CD8-positive, alpha-beta T cell (primary cell): ENCODE measurements at regions of chr2 and their contacts with region 1.

Region 1: DNA sequence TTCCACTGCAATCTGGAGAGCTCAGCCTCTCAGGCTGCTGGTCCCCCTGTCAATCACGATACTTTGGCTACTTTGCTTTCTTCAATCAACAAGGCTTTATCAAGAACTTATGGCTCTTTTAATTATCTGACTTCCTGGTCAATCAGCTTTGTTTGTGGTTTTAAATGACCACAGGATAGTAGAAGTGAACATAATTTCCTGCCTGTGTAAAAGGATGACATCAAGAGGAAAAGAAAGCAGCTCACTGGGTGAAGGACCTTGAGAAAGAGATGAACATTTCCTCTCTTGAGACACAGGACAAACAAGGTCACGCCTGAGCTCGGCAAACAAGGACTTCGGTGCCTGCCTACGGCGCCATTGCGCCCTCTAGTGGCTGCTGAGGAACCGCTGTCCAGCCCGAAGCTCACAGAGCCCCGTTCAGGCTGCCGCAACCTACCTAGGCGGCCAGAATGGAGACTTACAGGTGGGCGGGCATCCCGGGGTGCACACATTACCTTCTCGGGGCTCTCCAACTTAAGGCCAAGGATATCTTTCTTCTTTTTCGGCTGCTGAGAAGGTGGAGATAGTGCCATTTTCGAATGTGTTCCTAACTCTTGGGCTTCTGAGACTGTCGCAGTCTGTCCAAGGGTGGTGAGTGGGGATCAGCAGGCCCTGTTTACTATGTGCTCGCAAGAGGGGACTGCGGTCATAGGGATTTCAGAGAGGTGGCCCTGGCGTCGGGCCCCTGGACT is 54.0 kb downstream of the IL1RL2 start:
- DNase-seq: peak; percentile 71 to 92 (median 85)
- ATAC-seq: peak; percentile 92
- H3K4me3 ChIP-seq: no peak overlapping the region
- H3K4me3 Mint-ChIP-seq: peak overlapping the region; percentile 22
- H3K27ac ChIP-seq: peak overlapping the region in 1 of 2 experiments; percentile 22
- H3K27ac Mint-ChIP-seq: no peak overlapping the region
- H3K4me1 ChIP-seq: peaks cover 4% of the 10 kb centered on the region
- H3K4me1 Mint-ChIP-seq: peaks cover 9% of the 10 kb centered on the region
- H3K27me3 ChIP-seq: no peaks in the 10 kb centered on the region
- H3K27me3 Mint-ChIP-seq: peaks cover 2% of the 10 kb centered on the region
- CTCF ChIP-seq: peak; percentile 95

Region 2: GRCh38 chr2:101419096-101419663 is 821.6 kb before region 1 on chr2:
- CTCF ChIA-PET with region 1: interaction called, 10 read pairs
- POLR2A ChIA-PET with region 1: no interaction called
- intact Hi-C with region 1: loop called in 1 of 2 experiments (anchors 2 kb)
- DNase-seq: peak; percentile 11 to 78 (median 63)
- ATAC-seq: peak; percentile 71
- H3K4me3 ChIP-seq: no peak overlapping the region
- H3K4me3 Mint-ChIP-seq: no peak overlapping the region
- H3K27ac ChIP-seq: no peak overlapping the region
- H3K27ac Mint-ChIP-seq: no peak overlapping the region
- H3K4me1 ChIP-seq: no peaks in the 10 kb centered on the region
- H3K4me1 Mint-ChIP-seq: no peaks in the 10 kb centered on the region
- H3K27me3 ChIP-seq: no peaks in the 10 kb centered on the region
- H3K27me3 Mint-ChIP-seq: no peaks in the 10 kb centered on the region
- CTCF ChIP-seq: peak; percentile 82

Region 3: DNA sequence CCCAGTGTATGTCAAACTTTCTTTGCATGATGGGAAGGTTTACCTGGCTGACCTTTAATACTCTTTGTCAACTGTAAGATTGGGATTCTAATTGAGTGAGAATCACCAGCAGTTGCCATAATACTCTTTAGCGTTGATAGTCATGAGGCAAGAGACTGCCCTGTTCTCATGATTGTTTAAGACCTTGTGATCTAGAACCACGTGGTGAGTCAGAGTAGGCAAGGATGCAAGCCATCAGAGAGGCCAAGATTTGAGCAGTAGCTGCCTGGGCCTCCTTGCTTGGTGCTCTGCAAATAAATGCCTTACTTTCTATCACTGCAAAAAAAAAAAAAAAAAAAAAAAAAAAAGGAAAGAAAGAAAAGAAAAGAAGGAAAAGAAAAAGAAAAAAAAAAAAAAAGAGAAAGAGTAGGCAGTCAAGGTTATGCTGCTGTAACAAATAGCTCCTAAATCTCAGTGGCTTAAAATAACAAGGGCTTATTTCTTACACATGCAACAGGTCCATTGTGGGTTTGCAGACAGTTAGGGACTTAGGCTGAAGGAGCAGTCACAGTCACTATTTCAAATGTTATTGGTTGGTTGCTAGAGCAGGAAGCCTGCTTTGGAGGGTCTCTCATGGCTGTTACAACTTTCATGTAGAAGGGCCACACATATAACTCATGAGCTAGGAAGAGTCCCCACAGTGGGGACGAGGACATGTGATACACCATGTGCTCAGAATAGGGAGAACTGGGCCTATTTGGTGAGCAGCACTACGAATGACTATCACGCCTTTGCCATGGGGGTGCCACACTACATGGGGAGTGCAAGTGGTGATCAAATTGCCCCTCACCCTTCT is 227.4 kb before region 1 on chr2:
- CTCF ChIA-PET with region 1: interaction called, 69 read pairs
- POLR2A ChIA-PET with region 1: no interaction called
- intact Hi-C with region 1: no loop called
- DNase-seq: no peak
- ATAC-seq: no peak
- H3K4me3 ChIP-seq: no peak overlapping the region
- H3K4me3 Mint-ChIP-seq: no peak overlapping the region
- H3K27ac ChIP-seq: no peak overlapping the region
- H3K27ac Mint-ChIP-seq: no peak overlapping the region
- H3K4me1 ChIP-seq: no peaks in the 10 kb centered on the region
- H3K4me1 Mint-ChIP-seq: no peaks in the 10 kb centered on the region
- H3K27me3 ChIP-seq: no peaks in the 10 kb centered on the region
- H3K27me3 Mint-ChIP-seq: no peaks in the 10 kb centered on the region
- CTCF ChIP-seq: no peak

Region 4: GRCh38 chr2:102050854-102051391 is 189.9 kb before region 1 on chr2:
- CTCF ChIA-PET with region 1: interaction called, 11 read pairs
- POLR2A ChIA-PET with region 1: no interaction called
- intact Hi-C with region 1: no loop called
- DNase-seq: no peak
- ATAC-seq: no peak
- H3K4me3 ChIP-seq: no peak overlapping the region
- H3K4me3 Mint-ChIP-seq: no peak overlapping the region
- H3K27ac ChIP-seq: no peak overlapping the region
- H3K27ac Mint-ChIP-seq: no peak overlapping the region
- H3K4me1 ChIP-seq: no peaks in the 10 kb centered on the region
- H3K4me1 Mint-ChIP-seq: peaks cover 5% of the 10 kb centered on the region
- H3K27me3 ChIP-seq: no peaks in the 10 kb centered on the region
- H3K27me3 Mint-ChIP-seq: peaks cover 17% of the 10 kb centered on the region
- CTCF ChIP-seq: no peak

Region 5: GRCh38 chr2:102226612-102227391 is 14.0 kb before region 1 on chr2:
- CTCF ChIA-PET with region 1: interaction called, 17 read pairs
- POLR2A ChIA-PET with region 1: interaction called, 3 read pairs
- intact Hi-C with region 1: no loop called
- DNase-seq: no peak
- ATAC-seq: no peak
- H3K4me3 ChIP-seq: no peak overlapping the region
- H3K4me3 Mint-ChIP-seq: no peak overlapping the region
- H3K27ac ChIP-seq: peak overlapping the region in 1 of 2 experiments; percentile 1
- H3K27ac Mint-ChIP-seq: peak overlapping the region; percentile 6
- H3K4me1 ChIP-seq: peaks cover 7% of the 10 kb centered on the region
- H3K4me1 Mint-ChIP-seq: peaks cover 11% of the 10 kb centered on the region
- H3K27me3 ChIP-seq: no peaks in the 10 kb centered on the region
- H3K27me3 Mint-ChIP-seq: no peaks in the 10 kb centered on the region
- CTCF ChIP-seq: no peak

Region 6: DNA sequence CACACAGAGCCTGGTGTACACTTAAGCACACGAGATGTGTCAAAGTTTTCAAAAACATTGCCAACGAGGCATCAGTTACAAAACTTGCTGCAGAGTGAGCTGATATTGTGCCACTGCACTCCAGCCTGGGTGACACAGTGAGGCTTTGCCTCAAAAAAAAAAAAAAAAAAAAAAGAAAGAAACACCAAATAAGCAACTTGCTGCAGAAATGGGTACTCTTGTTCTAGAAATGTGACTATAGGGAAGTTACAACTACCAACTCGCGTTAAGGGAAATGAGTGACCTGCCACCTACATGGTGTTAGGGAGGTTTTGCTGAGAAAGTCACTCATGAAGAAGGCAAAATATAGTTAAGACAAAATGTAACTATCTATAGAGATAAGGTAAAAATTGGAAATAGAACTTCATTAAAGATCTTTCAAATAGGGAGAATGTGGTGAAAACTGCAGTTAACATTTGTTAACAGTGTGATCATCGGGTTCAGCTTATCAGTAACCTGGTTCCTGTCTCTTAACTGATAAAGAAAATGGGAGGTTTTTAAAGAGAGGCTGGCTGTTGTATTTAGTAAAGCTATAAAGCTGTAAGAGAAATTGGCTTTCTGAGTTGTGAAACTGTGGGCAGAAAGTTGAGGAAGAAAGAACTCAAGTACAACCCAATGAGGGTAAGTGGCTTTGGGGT is 70.3 kb after region 1 on chr2 and contains the start of gene IL1RL1:
- CTCF ChIA-PET with region 1: no interaction called
- POLR2A ChIA-PET with region 1: no interaction called
- intact Hi-C with region 1: no loop called
- DNase-seq: no peak
- ATAC-seq: no peak
- H3K4me3 ChIP-seq: no peak within 1 kb of the TSS
- H3K4me3 Mint-ChIP-seq: no peak within 1 kb of the TSS
- H3K27ac ChIP-seq: no peak within 1 kb of the TSS
- H3K27ac Mint-ChIP-seq: no peak within 1 kb of the TSS
- H3K4me1 ChIP-seq: no peaks in the 10 kb centered on the region
- H3K4me1 Mint-ChIP-seq: no peaks in the 10 kb centered on the region
- H3K27me3 ChIP-seq: no peaks in the 10 kb centered on the region
- H3K27me3 Mint-ChIP-seq: no peaks in the 10 kb centered on the region
- CTCF ChIP-seq: no peak
- total RNA-seq, gene IL1RL1: not detected

Region 7: DNA sequence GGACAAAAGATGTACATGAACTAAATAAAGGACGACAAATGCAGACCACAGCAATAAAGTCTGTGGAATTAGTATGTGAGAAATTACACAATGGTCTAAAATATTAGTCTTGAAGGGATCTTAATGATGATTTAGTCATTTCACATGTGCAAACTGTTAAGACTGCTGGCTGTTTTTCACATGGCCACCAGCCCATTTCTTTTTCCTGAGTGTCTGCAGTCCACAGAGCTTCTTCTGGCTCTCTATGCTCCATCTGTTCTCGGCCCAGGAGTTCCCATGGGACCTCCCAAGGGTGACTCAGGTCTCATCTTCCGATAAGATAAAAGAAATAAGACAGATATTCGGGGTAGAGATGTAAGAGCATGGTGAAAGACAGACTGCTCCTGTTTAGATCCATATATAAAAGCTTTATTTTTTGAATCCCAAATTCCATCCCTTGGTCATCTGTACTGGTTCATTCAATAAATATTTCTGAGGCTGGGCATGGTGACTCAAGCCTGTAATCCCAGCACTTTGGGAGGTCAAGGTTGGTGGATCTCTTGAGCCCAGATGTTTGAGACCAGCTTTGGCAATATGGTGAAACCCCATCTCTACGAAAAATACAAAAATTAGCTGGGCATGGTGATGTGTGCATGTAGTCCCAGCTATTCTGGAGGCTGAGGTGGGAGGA is 90.6 kb after region 1 on chr2:
- CTCF ChIA-PET with region 1: interaction called, 14 read pairs
- POLR2A ChIA-PET with region 1: no interaction called
- intact Hi-C with region 1: no loop called
- DNase-seq: no peak
- ATAC-seq: no peak
- H3K4me3 ChIP-seq: no peak overlapping the region
- H3K4me3 Mint-ChIP-seq: no peak overlapping the region
- H3K27ac ChIP-seq: no peak overlapping the region
- H3K27ac Mint-ChIP-seq: no peak overlapping the region
- H3K4me1 ChIP-seq: no peaks in the 10 kb centered on the region
- H3K4me1 Mint-ChIP-seq: no peaks in the 10 kb centered on the region
- H3K27me3 ChIP-seq: no peaks in the 10 kb centered on the region
- H3K27me3 Mint-ChIP-seq: no peaks in the 10 kb centered on the region
- CTCF ChIP-seq: no peak

Region 8: GRCh38 chr2:102449370-102449974 is 208.7 kb after region 1 on chr2:
- CTCF ChIA-PET with region 1: interaction called, 60 read pairs
- POLR2A ChIA-PET with region 1: no interaction called
- intact Hi-C with region 1: loop called in 1 of 2 experiments (anchors 5 kb)
- DNase-seq: peak; percentile 36 to 74 (median 61)
- ATAC-seq: no peak
- H3K4me3 ChIP-seq: no peak overlapping the region
- H3K4me3 Mint-ChIP-seq: no peak overlapping the region
- H3K27ac ChIP-seq: no peak overlapping the region
- H3K27ac Mint-ChIP-seq: no peak overlapping the region
- H3K4me1 ChIP-seq: no peaks in the 10 kb centered on the region
- H3K4me1 Mint-ChIP-seq: peaks cover 3% of the 10 kb centered on the region
- H3K27me3 ChIP-seq: no peaks in the 10 kb centered on the region
- H3K27me3 Mint-ChIP-seq: no peaks in the 10 kb centered on the region
- CTCF ChIP-seq: peak; percentile 71